Esophagus squamous epithelium (tissue), 5 donors: ENCODE measurements at regions of chr4 and their contacts with region 1.

Region 1: GRCh38 chr4:38179690-38180377 is 219.6 kb downstream of the PTTG2 start:
- DNase-seq: no peak
- H3K4me3 ChIP-seq: no peak overlapping the region
- H3K27ac ChIP-seq: peak overlapping the region; percentile 10 to 74 (median 59)
- H3K4me1 ChIP-seq: peaks cover 13 to 60% (median 23%) of the 10 kb centered on the region in 3 donors
- H3K27me3 ChIP-seq: no peaks in the 10 kb centered on the region
- CTCF ChIP-seq: peak; percentile 72 to 98 (median 93)
- POLR2A ChIP-seq: no peak

Region 2: DNA sequence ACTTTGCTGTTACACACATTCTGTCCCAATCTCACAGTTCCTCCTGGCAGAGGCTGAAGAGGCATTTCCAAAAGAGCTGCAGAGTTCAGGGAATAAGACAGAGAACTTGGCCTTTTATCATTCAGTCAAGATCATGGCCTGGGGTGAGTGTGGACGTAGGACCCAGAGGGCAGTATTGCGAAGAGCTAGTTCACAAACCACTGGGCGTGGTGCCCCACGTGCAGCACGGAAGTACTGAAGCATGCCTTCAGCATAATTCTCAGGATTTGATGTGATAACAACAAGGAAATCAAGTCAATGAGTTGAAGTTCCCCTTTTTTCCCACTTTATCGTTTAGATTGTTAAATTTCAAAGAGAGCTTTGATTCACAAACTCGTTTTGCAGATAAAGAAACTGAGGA is 611.4 kb before region 1 on chr4:
- intact Hi-C with region 1: no loop called
- DNase-seq: no peak
- H3K4me3 ChIP-seq: no peak overlapping the region
- H3K27ac ChIP-seq: no peak overlapping the region
- H3K4me1 ChIP-seq: no peaks in the 10 kb centered on the region
- H3K27me3 ChIP-seq: no peaks in the 10 kb centered on the region
- CTCF ChIP-seq: no peak
- POLR2A ChIP-seq: no peak

Region 3: DNA sequence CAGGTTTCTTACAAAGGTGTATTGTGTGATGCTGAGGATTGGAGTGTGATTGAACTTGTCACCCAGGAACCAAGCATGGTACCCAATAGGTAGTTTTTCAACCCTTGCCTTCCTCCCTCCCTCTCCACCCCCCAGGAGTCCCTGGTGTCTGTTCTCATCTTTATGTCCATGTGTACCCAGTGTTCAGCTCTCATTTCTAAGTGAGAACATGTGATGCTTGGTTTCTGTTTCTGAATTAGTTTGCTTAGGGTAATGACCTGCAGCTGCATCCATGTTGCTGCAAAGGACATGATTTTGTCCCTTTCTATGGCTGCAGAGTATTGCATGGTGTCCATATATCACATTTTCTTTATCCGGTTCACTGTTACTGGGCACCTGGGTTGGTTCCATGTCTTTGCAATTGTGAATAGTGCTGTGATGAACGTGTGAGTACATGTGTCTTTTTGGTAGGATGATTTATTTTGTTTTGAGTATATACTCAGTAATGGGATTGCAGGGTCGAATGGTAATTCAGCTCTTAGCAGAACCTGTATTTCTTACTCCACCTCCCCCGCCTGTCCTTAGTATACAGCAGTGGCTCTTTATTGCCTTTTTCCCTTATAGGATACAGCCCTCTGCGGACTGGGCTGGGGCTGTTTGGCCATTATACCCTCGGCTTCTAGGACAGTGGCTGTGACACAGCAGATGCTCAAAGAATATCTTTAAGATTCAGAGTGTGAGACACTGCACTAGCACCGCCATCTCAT is 74.2 kb before region 1 on chr4:
- intact Hi-C with region 1: no loop called
- DNase-seq: no peak
- H3K4me3 ChIP-seq: no peak overlapping the region
- H3K27ac ChIP-seq: no peak overlapping the region
- H3K4me1 ChIP-seq: peaks cover 0 to 19% (median 0%) of the 10 kb centered on the region in 3 donors
- H3K27me3 ChIP-seq: no peaks in the 10 kb centered on the region
- CTCF ChIP-seq: no peak
- POLR2A ChIP-seq: no peak

Region 4: GRCh38 chr4:38347251-38347650 is 167.4 kb after region 1 on chr4:
- intact Hi-C with region 1: no loop called
- DNase-seq: no peak
- H3K4me3 ChIP-seq: no peak overlapping the region
- H3K27ac ChIP-seq: no peak overlapping the region
- H3K4me1 ChIP-seq: no peaks in the 10 kb centered on the region
- H3K27me3 ChIP-seq: no peaks in the 10 kb centered on the region
- CTCF ChIP-seq: no peak
- POLR2A ChIP-seq: no peak

Region 5: DNA sequence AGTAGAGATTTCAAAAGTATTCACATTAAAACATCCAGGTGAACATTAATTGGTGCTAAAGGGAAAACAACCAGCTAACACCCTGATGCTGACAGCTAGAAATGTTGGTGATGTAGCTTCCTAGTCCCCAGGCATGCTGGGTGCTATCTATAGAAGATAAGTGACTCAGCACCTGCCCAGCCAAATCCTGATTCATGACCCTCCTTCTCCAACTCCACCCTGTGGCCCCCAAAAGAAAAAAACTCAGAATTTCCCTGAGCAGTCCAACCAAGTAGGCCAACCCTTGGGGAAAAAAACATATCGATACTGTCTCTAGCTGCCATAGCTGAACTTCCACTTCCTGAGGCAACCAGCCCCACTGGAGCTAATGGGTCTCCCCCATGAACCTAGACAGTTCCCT is 286.6 kb after region 1 on chr4:
- intact Hi-C with region 1: no loop called
- DNase-seq: no peak
- H3K4me3 ChIP-seq: no peak overlapping the region
- H3K27ac ChIP-seq: no peak overlapping the region
- H3K4me1 ChIP-seq: peaks cover 0 to 50% (median 11%) of the 10 kb centered on the region in 3 donors
- H3K27me3 ChIP-seq: no peaks in the 10 kb centered on the region
- CTCF ChIP-seq: no peak
- POLR2A ChIP-seq: no peak

Region 6: GRCh38 chr4:38673130-38673978 is 493.5 kb after region 1 on chr4:
- intact Hi-C with region 1: loop called (anchors 5 kb)
- DNase-seq: no peak
- H3K4me3 ChIP-seq: peak overlapping the region in 3 of 4 donors; percentile 20 to 50 (median 21)
- H3K27ac ChIP-seq: peak overlapping the region; percentile 95 to 100 (median 97)
- H3K4me1 ChIP-seq: peaks cover 84 to 100% (median 94%) of the 10 kb centered on the region in 3 donors
- H3K27me3 ChIP-seq: no peaks in the 10 kb centered on the region
- CTCF ChIP-seq: peak in 1 of 6 experiments; percentile 8
- POLR2A ChIP-seq: peak in 1 of 4 donors; percentile 26

Region 7: DNA sequence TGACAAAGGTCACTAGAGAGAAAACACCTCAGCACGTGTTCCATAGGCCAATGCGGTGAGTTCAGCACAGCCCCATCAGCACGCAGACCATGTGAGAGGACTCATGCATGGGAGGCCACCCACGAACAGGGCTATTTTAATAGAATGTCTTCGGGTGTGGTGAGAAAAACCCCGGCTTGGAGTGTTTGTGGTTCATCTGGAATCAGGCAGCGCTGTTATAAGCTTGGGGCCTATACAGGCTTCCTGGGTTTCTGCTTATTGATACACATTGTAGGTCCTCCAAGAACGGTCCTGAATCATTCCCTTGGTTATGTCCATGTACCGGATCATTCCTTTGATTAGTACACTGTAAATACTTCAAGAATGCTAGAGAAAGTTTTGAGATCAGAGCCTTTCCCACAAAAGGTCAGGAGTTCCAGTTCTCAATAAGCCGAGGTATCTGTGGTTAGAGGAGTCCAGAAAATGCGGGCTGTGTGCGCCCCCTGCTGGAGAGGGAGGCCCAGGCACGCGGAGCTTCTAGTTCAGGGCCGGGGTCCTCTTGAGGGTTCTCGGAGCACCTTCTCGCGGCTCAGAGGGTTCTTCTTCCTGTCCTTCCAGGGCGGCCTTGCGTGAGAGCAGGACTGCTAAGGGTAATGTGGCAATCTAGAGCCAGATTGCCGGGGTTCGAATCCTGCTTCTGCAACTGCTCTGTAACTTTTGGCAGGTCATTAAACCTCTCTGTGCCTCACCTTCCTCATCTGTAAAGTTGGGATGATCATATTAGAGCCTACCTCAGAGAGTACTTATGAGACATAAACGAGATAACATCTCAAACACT is 551.2 kb after region 1 on chr4:
- intact Hi-C with region 1: loop called (anchors 5 kb)
- DNase-seq: peak; percentile 25
- H3K4me3 ChIP-seq: no peak overlapping the region
- H3K27ac ChIP-seq: no peak overlapping the region
- H3K4me1 ChIP-seq: peaks cover 8 to 50% (median 12%) of the 10 kb centered on the region in 3 donors
- H3K27me3 ChIP-seq: no peaks in the 10 kb centered on the region
- CTCF ChIP-seq: peak; percentile 88 to 98 (median 94)
- POLR2A ChIP-seq: no peak